Right ventricle myocardium inferior (tissue), 1 donor: ENCODE measurements at regions of chr5 and their contacts with region 1.

Region 1: GRCh38 chr5:157575381-157576020 is at the start of gene ADAM19:
- DNase-seq: peak; percentile 85
- ATAC-seq: peak; percentile 90
- total RNA-seq, gene ADAM19: 11.3 TPM

Region 2: DNA sequence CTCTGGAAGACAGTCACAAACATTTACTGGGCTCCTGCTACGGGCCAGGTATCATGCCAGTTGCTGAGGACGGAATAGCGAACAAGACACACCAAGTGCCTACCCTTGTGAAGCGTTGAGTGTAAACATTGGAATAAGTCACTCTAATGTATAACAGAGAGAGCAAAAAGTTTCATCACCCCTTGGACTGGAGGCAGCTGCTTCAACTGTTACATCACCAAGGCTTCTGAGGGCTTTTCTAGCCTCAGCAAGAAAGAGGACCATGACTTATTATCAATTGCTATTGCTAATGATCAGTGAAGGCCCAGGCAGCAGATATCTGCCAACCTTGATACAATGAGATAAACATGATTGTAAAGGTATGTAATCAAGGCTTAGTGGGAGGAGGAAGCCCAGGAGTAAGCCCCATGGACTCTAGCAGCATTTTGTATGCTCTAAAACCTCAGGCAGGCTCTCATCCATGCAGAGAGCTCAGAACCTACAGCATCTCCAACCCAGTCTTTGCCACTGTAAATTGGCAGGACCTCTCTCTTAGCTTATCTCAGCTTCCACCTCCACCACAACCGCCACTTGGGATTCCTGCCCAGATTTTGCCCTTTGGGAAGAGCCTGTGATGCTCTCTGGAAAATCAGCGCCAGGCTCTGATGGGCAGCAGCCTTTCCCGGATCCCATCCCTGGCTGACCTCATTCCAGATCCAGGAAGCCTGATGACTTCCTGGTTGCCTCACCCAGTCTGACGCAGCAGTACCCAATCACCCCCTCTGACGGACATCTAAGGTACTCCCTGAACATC is 54.4 kb before region 1 on chr5:
- intact Hi-C with region 1: loop called (anchors 5 kb)
- DNase-seq: no peak
- ATAC-seq: peak; percentile 53

Region 3: GRCh38 chr5:157540707-157541446 is 34.6 kb before region 1 on chr5:
- intact Hi-C with region 1: no loop called
- DNase-seq: peak; percentile 75
- ATAC-seq: peak; percentile 78